GM18951 (cell line): ENCODE measurements at regions of chrX and their contacts with region 1.

Region 1: DNA sequence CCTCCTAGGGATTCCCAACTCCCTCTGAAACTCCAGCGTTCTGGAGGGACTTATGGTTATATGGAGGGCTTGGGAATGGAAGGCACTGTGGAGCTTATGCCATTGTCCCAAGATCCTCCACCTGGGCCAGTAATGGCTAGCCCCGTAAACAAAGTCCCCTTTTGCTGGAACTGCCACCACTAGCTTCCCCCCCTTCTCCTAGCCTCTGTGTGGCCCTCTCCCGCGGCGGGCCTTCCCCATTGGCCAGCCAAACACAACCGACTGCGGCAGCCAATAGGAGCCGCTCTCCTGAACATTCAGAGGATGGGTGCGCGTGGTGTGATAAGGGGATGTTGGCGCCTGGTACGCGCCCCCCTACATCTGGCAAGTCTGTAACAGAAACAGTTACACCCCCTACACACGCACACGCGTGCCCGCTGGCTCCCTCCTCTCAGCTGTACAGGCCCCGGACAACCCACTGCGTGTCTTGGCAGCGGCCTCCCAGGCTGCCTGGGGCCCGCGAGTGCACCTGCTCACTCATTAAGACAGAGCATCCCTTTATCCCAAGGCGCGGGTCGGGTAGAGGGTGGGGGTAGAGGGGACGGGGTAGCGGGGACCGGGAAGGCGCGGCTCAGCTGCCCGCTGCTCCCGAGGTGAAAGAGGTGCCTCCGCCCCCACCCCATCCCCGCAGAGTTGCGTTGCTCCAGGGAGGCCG is 863 bp upstream of the RAB33A start:
- POLR2A ChIP-seq: peak; percentile 37

Region 2: GRCh38 chrX:130079824-130080406 is 91.0 kb before region 1 on chrX:
- in situ Hi-C with region 1: loop called (anchors 10 kb)
- POLR2A ChIP-seq: no peak

Region 3: DNA sequence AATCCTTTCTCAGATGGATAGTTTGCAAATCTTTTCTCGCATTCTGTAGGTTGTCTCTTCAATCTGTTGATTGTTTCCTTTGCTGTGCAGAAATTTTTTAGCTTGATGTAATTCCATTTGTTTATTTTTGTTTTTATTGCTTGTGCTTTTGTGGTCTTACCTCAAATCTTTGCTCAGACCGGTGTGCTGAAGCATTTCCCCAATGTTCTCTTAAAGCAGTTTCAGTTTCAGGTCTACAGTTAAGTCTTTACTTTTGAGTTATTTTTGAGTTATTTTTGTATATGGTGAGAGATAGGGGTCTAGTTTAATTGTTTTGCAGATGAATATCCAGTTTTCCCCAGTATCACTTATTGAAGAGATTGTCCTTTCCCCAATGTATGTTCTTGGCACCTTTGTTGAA is 150.7 kb after region 1 on chrX:
- in situ Hi-C with region 1: no loop called
- POLR2A ChIP-seq: no peak